Thyroid gland (tissue), 4 donors: ENCODE measurements at regions of chr9 and their contacts with region 1.

Region 1: GRCh38 chr9:26955921-26956859 is at the start of gene IFT74:
- DNase-seq: peak; percentile 99
- H3K4me3 ChIP-seq: peak within 1 kb of the TSS; percentile 45 to 85 (median 50)
- H3K27ac ChIP-seq: peak within 1 kb of the TSS; percentile 64 to 88 (median 83)
- H3K4me1 ChIP-seq: peaks cover 5 to 9% of the 10 kb centered on the region in 2 donors
- H3K27me3 ChIP-seq: no peaks in the 10 kb centered on the region
- CTCF ChIP-seq: no peak
- POLR2A ChIP-seq: peak; percentile 15 to 87
- total RNA-seq, gene IFT74: 23.0 to 40.0 (median 29.9) TPM

Region 2: GRCh38 chr9:26524267-26524666 is 431.9 kb before region 1 on chr9:
- intact Hi-C with region 1: no loop called
- DNase-seq: peak; percentile 81 to 88
- H3K4me3 ChIP-seq: no peak overlapping the region
- H3K27ac ChIP-seq: peak overlapping the region in 1 of 3 donors; percentile 1
- H3K4me1 ChIP-seq: peaks cover 17 to 19% of the 10 kb centered on the region in 2 donors
- H3K27me3 ChIP-seq: no peaks in the 10 kb centered on the region
- CTCF ChIP-seq: no peak
- POLR2A ChIP-seq: no peak

Region 3: DNA sequence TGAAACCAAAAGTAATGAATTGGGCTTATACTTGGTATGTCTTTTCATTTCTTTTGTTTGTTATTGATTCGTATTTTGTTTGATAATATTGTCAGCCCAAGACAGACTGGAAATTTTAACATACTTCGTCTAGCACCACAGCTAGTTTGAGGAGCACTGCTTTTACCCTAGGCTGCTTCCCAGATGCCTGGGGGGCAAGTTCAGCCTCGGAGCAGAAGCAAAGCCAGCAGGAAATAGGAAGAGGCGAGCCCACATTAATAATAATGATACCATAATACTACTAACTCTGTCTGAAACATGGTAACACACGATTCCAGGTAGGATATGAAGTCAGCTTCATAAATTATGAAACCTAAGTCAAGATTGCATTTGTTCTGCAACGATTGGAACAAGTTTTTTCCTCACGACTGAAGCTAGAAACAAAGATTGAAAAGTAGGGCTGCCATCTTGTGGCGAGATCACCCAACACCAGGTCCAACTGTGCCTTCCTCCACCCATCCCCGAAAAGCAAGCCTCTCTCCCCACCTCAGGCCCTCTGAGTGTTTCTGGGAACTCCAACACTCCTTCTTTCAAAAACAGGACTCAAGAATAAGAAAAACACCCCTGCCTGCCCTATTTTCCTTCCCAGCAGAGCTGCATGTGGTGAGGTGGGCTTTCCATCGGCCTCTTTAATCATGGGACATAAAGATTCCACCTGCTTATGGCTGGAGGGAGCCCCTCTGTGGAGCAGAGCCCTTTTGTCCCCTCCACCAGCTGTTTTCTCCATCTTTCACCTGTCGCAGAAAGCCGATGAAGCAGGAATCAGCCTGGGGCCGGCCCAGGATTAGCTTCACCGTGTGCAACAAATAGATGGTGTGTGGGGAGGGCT is 300.0 kb before region 1 on chr9:
- intact Hi-C with region 1: no loop called
- DNase-seq: peak; percentile 53 to 63
- H3K4me3 ChIP-seq: no peak overlapping the region
- H3K27ac ChIP-seq: no peak overlapping the region
- H3K4me1 ChIP-seq: peaks cover 0 to 8% of the 10 kb centered on the region in 2 donors
- H3K27me3 ChIP-seq: no peaks in the 10 kb centered on the region
- CTCF ChIP-seq: peak in 4 of 6 experiments; percentile 49 to 80 (median 67)
- POLR2A ChIP-seq: no peak

Region 4: DNA sequence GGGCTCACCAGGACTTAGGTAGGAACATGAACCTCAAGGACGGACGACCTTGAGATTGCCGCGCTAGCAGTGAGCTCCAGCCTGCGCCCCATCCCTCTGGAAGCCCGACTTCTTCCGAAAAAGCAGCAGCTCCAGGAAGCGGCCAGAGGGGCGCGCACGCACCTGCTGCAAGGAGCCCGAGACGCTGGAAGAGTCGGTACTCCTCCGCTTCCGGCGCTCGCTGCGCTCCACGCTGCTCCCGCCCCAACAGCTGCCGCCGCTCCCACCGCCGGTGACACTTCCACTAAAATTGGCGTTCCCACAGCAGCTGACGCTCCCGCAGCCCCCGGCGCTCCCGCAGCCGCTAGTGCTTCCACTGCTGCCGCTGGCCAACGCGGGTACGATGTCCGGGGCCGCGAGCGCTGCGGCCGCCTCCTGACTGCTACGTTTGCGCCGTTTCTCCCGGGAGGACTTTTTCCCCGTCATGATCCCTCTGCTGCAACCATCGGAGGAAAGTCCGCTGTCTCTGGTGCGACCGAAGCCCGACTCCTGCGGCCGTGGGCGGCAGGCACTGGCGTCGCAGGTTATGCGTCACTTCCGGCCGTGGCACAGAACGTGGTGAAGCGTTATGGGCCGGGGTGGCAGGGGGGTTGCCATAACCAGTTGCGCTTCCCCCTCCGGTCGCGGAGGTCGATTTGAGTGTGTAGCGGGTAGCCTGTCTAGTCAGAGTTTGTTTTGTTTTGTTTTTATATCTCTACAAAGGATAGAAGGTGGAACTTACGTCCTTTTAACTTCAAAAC is 63.8 kb before region 1 on chr9 and contains the start of gene CAAP1:
- intact Hi-C with region 1: loop called (anchors 5 kb)
- DNase-seq: peak; percentile 95 to 96
- H3K4me3 ChIP-seq: peak within 1 kb of the TSS; percentile 67 to 97 (median 86)
- H3K27ac ChIP-seq: peak within 1 kb of the TSS; percentile 90 to 99 (median 99)
- H3K4me1 ChIP-seq: peaks cover 4 to 5% of the 10 kb centered on the region in 2 donors
- H3K27me3 ChIP-seq: no peaks in the 10 kb centered on the region
- CTCF ChIP-seq: peak in 3 of 6 experiments; percentile 32 to 43 (median 34)
- POLR2A ChIP-seq: peak; percentile 47 to 95
- total RNA-seq, gene CAAP1: 54.9 to 110 (median 56.5) TPM